Panc1 (cell line): ENCODE measurements at regions of chr16 and their contacts with region 1.

Region 1: GRCh38 chr16:68264128-68265077 is at the start of gene SLC7A6:
- DNase-seq: no peak
- ATAC-seq: peak; percentile 90
- H3K4me3 ChIP-seq: peak within 1 kb of the TSS; percentile 76 to 83
- H3K27ac ChIP-seq: peak within 1 kb of the TSS; percentile 84
- H3K4me1 ChIP-seq: peaks cover 17% of the 10 kb centered on the region
- H3K27me3 ChIP-seq: no peaks in the 10 kb centered on the region
- CTCF ChIP-seq: peak; percentile 78
- total RNA-seq, gene SLC7A6: 58.9 TPM

Region 2: DNA sequence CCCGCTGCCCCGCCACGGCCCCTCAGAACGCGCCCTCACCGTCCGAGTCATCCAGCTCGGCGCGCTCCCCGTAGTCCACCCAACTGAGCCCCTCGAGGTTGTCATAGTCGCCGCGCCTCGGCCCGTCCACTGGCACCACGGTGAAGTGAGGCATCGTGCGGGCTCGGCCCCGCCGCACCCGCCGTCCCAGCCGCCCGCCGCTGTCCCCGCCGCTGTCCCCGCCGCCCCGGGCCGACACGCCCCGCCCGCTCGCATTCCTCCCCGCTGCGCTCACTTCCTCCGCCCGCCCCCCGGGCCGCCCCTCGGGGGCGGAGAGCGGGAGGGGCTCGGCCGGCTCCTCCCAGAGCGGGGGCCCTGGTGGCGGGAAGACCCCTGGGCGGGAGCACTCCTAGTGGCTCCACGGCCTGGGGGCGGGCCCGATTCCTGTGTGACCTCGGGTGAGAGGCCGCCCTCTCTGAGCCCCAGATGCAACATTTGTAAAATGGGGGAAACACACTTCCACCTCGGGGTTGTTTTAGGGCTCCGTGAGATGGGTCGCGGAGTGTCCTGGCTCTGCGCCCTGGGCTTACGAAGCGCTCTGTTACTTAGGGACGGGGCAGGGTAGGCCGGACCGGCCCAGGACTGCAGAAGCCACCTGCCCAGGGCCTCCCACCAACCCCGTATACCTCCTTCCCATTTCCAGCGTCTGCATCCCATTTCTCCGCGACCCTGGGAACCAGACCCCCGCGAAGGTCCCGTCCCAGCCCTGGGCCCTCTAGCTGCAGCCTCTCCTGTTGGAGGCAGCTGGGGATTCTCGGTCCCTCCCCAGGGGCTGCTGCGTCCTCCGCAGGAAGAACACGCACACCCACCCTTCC is 295.8 kb before region 1 on chr16 and contains the start of gene SLC12A4:
- CTCF ChIA-PET with region 1: interaction called, 10 read pairs
- POLR2A ChIA-PET with region 1: no interaction called
- in situ Hi-C with region 1: no loop called
- intact Hi-C with region 1: no loop called
- DNase-seq: no peak
- ATAC-seq: peak; percentile 91
- H3K4me3 ChIP-seq: peak within 1 kb of the TSS; percentile 69 to 85
- H3K27ac ChIP-seq: peak within 1 kb of the TSS; percentile 88
- H3K4me1 ChIP-seq: peaks cover 15% of the 10 kb centered on the region
- H3K27me3 ChIP-seq: no peaks in the 10 kb centered on the region
- CTCF ChIP-seq: no peak
- total RNA-seq, gene SLC12A4: 31.8 TPM

Region 3: GRCh38 chr16:68237243-68238028 is 27.0 kb before region 1 on chr16:
- CTCF ChIA-PET with region 1: interaction called, 10 read pairs
- POLR2A ChIA-PET with region 1: no interaction called
- in situ Hi-C with region 1: no loop called
- intact Hi-C with region 1: no loop called
- DNase-seq: peak; percentile 87
- ATAC-seq: peak; percentile 85
- H3K4me3 ChIP-seq: peak overlapping the region; percentile 62 to 76
- H3K27ac ChIP-seq: peak overlapping the region; percentile 94
- H3K4me1 ChIP-seq: peaks cover 8% of the 10 kb centered on the region
- H3K27me3 ChIP-seq: no peaks in the 10 kb centered on the region
- CTCF ChIP-seq: no peak

Region 4: DNA sequence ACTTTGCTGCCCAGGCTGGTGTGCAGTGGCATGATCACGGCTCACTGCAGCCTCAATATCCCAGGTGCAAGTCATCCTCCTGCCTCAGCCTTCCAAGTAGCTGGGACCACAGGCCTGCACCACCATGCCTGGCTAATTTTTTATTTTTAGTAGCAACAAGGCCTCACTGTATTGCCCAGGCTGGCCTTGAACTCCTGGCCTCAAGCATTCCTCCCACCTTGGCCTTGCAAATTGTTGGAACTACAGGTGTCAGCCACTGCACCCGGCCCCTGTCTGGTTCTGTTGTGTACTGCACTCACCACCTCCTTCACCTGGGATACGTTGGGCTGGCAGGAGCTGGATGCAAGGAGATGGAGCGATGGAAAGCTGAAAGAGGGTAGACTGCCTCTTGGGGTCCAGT is 10.7 kb before region 1 on chr16:
- CTCF ChIA-PET with region 1: no interaction called
- POLR2A ChIA-PET with region 1: interaction called, 14 read pairs
- in situ Hi-C with region 1: no loop called
- intact Hi-C with region 1: no loop called
- DNase-seq: no peak
- ATAC-seq: no peak
- H3K4me3 ChIP-seq: no peak overlapping the region
- H3K27ac ChIP-seq: no peak overlapping the region
- H3K4me1 ChIP-seq: no peaks in the 10 kb centered on the region; the same call in 1 of the 2 replicates
- H3K27me3 ChIP-seq: no peaks in the 10 kb centered on the region
- CTCF ChIP-seq: no peak

Region 5: DNA sequence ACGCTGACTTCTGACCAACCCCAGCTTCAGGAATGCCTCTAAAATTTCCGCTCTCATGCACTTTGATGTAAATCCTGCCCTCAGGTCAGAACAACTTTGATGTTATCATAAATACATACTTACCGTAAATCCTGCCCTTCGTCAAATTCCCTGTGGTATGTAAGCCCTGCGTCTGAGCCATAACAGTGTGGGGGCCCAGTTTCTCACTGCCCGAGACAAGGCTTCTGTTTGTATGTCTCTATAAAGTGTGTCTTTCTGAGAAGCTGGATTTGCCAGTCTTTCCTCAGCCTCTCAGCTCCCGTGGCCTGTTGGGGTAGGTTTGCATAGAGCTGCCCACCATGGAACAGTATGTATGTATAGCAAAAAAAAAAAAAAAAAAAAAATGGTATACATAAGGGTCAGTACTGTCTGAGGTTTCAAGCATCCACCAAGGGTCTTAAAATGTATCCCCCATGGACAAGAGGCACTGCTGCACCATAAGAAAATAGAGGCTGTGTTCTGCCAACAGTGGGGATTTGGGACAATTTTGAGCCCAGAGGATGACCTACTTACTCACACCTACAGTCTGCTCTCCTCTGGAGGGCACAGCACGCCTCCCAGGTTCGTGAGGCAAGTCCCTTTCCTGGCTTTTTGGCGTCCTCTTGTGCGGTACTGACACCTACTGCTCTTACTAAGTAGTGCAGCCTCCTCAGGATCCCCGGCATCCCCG is 63.9 kb after region 1 on chr16:
- CTCF ChIA-PET with region 1: interaction called, 5 read pairs
- POLR2A ChIA-PET with region 1: interaction called, 3 read pairs
- in situ Hi-C with region 1: no loop called
- intact Hi-C with region 1: loop called (anchors 5 kb)
- DNase-seq: peak; percentile 56
- ATAC-seq: peak; percentile 97
- H3K4me3 ChIP-seq: no peak overlapping the region
- H3K27ac ChIP-seq: no peak overlapping the region
- H3K4me1 ChIP-seq: peaks cover 13% of the 10 kb centered on the region
- H3K27me3 ChIP-seq: no peaks in the 10 kb centered on the region
- CTCF ChIP-seq: peak; percentile 85